Activated CD4-positive, alpha-beta T cell treated with anti-CD3 and anti-CD28 coated beads for 36 hours (primary cell): ENCODE measurements at regions of chr12 and their contacts with region 1.

Region 1: DNA sequence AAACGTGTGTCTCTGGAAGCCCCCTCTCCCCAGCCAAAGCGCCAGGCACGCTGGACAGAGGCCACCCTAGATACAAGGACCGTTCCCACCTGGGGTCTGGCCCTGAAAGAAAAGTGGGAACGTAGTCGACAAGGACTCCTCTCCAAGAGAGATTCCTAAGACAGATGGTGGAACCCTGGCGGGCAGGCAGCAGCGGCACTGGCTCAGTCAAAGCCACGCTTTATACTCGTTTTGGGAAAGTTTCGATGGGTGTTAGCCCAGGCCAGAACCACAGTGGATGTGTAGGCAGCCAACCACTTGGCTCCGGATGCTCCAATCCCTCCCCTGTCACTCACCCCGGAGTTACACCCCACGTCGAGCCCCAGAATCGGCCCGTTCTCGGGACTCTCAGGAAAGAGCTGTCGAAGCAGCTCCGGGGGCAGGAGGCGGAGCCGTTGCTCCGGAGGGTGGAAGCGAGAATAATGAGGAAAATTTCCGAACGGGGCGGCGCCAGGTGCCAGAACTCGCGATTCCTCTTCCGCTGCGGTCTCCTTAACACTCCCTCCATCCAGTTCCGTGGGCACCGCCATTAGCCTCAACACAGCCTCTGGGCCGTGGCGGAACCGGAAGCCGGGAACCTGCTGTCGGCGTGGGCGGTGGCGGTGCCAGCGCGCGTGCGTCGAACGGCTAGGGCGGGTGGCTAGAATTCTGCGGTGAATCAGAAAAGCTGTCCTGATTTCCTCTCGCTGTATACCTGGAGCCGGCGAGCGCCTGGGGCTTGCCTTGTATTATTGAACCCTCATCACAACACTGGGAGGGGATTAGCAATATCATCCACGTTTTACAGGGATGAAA is at the start of gene BCDIN3D:
- DNase-seq: peak; percentile 97
- ATAC-seq: peak; percentile 92
- H3K4me3 Mint-ChIP-seq: peak within 1 kb of the TSS; percentile 90
- H3K27ac Mint-ChIP-seq: peak within 1 kb of the TSS; percentile 91
- H3K4me1 Mint-ChIP-seq: peaks cover 30% of the 10 kb centered on the region
- H3K27me3 Mint-ChIP-seq: no peaks in the 10 kb centered on the region
- total RNA-seq, gene BCDIN3D: 5.5 to 5.6 TPM

Region 2: DNA sequence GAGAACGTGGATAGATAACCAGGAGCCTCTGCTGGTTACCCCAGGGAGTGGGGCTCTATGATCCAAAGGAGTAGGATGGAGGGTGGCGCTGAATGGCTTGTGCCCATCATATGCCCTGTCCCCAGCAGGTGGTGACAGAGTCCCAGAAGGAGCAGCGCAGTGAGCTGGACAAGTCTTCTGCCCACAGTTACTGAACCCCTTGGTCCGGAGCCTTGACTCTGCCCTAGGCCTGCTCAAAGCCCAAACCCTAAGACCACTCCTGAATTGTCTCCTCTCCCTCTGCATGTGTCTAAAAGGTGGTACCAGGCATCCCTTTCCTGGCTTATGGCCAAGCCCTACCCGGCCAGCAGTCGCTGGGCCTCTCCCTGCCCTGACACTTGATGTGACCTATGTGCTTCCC is 544.6 kb before region 1 on chr12:
- CTCF ChIA-PET with region 1: no interaction called
- POLR2A ChIA-PET with region 1: no interaction called
- intact Hi-C with region 1: no loop called
- DNase-seq: peak; percentile 44
- ATAC-seq: no peak
- H3K4me3 Mint-ChIP-seq: no peak overlapping the region
- H3K27ac Mint-ChIP-seq: no peak overlapping the region
- H3K4me1 Mint-ChIP-seq: peaks cover 17% of the 10 kb centered on the region
- H3K27me3 Mint-ChIP-seq: peaks cover 53% of the 10 kb centered on the region

Region 3: DNA sequence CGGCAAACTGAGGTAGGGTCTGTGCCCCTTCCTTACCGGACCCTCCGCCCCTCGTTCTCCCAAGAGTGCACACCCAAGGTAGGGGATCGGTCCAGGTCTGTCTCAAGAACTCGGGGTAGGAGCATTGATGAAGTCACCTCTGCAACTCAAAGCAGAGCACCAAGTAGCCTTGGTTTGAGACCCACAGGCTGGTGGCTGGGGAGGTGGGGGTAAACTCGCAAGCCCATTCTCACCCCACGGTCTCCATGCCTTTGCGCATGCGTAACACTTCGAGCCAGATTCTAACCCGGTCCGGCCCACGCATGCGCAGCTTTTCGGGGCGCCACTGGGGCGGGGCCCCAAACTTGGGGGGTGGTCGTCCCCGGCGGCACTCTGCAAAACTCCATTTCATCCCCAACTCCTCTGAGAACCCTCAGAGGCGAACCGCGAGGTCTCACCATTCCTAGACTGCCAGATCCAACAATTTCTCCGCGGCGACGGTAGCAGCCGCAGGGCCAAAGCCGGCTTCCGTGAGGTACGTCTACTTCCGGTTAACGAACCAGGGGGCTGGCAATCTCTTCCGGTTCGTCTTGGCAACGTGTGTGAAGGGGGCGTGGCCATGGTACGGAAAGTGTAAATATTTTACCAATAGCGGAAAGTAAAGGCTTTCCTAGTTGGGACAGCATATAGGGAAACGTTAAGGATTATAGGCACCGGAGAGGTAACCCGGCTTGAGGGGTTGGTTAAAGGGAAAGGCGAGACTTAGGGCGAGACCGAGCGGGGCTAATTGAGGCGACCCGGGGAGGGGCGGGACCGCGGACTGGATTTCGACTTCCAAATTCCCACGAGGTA is 274.9 kb before region 1 on chr12 and contains the start of gene MCRS1:
- CTCF ChIA-PET with region 1: no interaction called
- POLR2A ChIA-PET with region 1: no interaction called
- intact Hi-C with region 1: loop called in 1 of 2 experiments (anchors 5 kb)
- DNase-seq: peak; percentile 93
- ATAC-seq: peak; percentile 88
- H3K4me3 Mint-ChIP-seq: peak within 1 kb of the TSS; percentile 90
- H3K27ac Mint-ChIP-seq: peak within 1 kb of the TSS; percentile 95
- H3K4me1 Mint-ChIP-seq: peaks cover 37% of the 10 kb centered on the region
- H3K27me3 Mint-ChIP-seq: no peaks in the 10 kb centered on the region
- total RNA-seq, gene MCRS1: 48.2 to 58.2 TPM

Region 4: DNA sequence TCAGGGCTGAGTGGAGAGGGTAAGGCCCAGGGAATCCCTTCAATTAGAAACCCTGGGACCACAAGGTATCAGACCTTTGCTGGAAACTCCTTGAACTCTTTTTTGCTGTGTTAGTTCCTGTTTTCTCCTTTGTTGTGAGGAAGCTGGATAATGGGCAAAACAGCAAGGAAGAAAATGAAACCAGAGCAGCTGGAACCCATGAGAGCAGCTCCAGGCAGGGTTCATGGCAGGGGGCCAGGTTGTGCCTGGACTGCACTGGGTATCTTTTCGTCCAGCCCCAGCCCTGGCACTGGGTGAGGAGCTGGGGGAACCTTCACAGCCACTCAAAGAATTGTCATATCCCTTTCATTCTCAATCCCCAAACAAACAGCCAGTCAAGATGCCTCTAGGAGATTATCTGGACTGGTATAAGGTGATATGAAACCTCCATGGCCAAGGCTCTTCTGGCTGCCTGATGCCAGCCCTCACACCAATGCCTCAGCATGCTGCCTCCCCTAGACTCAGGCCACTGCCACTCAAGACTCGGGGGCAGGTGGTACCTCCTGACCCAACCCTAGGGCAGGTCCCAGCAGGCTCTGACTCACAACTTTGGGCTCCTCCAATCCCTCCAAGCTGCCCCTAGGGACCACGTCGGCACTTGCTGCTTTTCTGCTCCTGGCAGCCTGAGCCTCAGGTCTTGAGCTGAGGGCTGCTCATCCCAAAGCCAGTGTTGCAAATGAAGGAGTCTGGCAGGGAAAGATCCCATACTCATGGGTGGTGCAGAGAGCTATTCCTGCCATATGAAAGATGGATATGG is 253.8 kb before region 1 on chr12:
- CTCF ChIA-PET with region 1: no interaction called
- POLR2A ChIA-PET with region 1: no interaction called
- intact Hi-C with region 1: no loop called
- DNase-seq: no peak
- ATAC-seq: no peak
- H3K4me3 Mint-ChIP-seq: no peak overlapping the region
- H3K27ac Mint-ChIP-seq: no peak overlapping the region
- H3K4me1 Mint-ChIP-seq: no peaks in the 10 kb centered on the region
- H3K27me3 Mint-ChIP-seq: no peaks in the 10 kb centered on the region

Region 5: GRCh38 chr12:49644620-49644994 is 198.1 kb before region 1 on chr12:
- CTCF ChIA-PET with region 1: interaction called, 3 read pairs
- POLR2A ChIA-PET with region 1: interaction called, 3 read pairs
- intact Hi-C with region 1: loop called in 1 of 2 experiments (anchors 2 kb)
- DNase-seq: peak; percentile 89
- ATAC-seq: peak; percentile 93
- H3K4me3 Mint-ChIP-seq: no peak overlapping the region
- H3K27ac Mint-ChIP-seq: peak overlapping the region; percentile 78
- H3K4me1 Mint-ChIP-seq: peaks cover 18% of the 10 kb centered on the region
- H3K27me3 Mint-ChIP-seq: no peaks in the 10 kb centered on the region

Region 6: DNA sequence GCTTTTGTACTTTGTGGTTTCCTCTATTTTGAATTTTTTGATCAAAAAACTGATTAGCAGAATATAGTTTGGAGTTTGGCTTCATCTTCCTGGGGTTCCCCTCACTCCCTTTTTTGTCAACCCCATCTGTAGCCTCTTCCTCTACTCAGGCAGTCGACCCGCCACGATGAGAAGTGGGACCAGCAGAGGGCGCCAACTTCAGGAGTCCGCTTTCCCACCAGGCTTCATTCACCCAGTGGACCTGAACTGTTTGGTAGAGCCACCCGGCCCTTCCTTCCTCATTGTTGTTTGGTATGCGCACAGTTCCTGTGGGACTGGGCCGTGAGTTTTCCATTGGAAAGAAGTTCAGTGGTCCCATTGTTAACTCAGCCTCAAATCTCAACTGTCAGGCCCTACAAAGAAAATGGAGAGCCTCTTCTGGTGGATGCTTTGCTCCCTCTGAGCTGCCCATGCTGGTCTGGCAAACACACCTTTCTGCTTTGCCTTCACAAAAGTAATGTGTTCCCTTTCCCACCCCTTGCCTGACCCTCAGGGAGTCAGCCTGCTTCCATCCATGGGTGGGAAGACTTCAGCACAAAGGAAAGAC is 79.6 kb before region 1 on chr12:
- CTCF ChIA-PET with region 1: interaction called, 19 read pairs
- POLR2A ChIA-PET with region 1: no interaction called
- intact Hi-C with region 1: no loop called
- DNase-seq: peak; percentile 89
- ATAC-seq: peak; percentile 59
- H3K4me3 Mint-ChIP-seq: peak overlapping the region; percentile 24
- H3K27ac Mint-ChIP-seq: peak overlapping the region; percentile 77
- H3K4me1 Mint-ChIP-seq: peaks cover 62% of the 10 kb centered on the region
- H3K27me3 Mint-ChIP-seq: no peaks in the 10 kb centered on the region

Region 7: DNA sequence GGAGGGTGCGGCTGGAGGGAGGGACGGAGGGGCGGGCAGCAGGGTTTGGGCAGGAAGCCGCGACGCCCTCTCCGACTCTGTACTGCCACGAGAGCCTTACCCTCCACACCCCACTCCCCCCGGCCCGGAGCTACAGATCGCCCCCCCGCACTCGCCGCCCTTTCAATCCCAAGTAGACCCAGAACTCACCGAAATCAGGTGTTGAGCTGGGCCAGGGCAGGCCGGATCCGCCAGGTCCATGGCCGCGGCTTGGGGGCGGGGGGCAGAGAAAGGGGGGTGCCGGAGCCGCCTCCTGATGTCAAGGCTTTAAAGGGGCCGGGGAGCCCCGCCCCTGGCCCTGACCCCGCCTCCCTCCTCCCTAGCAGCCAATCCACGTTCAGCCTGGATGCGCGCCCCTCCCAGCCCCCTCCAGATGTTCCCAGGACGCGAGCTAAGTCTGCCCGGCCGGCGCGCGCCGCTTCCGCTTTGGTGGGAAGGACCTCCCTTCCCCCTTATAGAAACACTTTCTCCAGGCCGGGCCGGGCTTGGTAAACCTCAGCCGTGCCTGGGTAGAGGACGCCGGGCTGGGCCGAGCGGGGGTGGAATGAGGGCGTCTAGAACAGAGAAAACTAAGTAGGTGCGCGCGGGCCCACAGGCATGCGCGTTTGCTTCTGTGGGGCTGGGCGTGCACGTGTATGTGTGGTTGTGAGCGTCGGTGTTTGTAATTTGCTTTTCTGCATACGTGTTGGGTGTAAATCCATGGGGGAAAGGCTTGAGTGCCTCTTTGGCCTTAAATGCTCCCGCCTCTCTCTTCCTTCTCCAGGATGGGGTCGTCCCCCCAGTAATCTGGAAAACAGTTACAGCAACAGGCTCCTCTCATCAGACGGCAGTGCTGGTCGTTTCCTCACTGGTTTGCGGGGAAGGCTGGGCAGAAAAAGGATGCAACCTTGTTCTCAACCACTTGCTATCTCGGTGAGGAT is 14.3 kb before region 1 on chr12 and contains the start of gene NCKAP5L:
- CTCF ChIA-PET with region 1: interaction called, 44 read pairs
- POLR2A ChIA-PET with region 1: interaction called, 8 read pairs
- intact Hi-C with region 1: loop called (anchors 1 kb)
- DNase-seq: peak; percentile 97
- ATAC-seq: peak; percentile 99
- H3K4me3 Mint-ChIP-seq: peak within 1 kb of the TSS; percentile 86
- H3K27ac Mint-ChIP-seq: peak within 1 kb of the TSS; percentile 90
- H3K4me1 Mint-ChIP-seq: peaks cover 27% of the 10 kb centered on the region
- H3K27me3 Mint-ChIP-seq: no peaks in the 10 kb centered on the region
- total RNA-seq, gene NCKAP5L: 4.3 to 4.5 TPM

Region 8: GRCh38 chr12:50025187-50026059 is 182.7 kb after region 1 on chr12 and contains the start of gene RACGAP1:
- CTCF ChIA-PET with region 1: no interaction called
- POLR2A ChIA-PET with region 1: no interaction called
- intact Hi-C with region 1: loop called (anchors 1 to 10 kb)
- DNase-seq: peak; percentile 97
- ATAC-seq: peak; percentile 98
- H3K4me3 Mint-ChIP-seq: peak within 1 kb of the TSS; percentile 90
- H3K27ac Mint-ChIP-seq: peak within 1 kb of the TSS; percentile 95
- H3K4me1 Mint-ChIP-seq: peaks cover 23% of the 10 kb centered on the region
- H3K27me3 Mint-ChIP-seq: no peaks in the 10 kb centered on the region
- total RNA-seq, gene RACGAP1: 99.7 to 118 TPM

Region 9: DNA sequence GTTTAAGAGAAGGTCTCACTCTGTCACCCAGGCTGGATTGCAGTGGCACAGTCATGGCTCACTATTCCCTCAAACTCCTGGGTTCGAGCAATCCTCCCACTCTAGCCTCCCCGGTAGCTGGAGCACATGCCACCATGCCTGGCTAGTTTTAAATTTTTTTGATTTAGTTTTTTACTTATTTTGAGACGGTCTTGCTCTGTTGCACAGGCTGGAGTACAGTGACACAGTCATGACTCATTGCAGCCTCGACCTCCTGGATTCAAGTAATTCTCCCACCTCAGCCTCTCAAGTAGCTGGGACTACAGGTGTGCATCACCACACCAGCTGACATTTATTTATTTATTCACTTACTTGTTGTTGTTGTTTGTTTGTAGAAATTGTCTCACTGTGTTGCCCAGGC is 639.8 kb after region 1 on chr12:
- CTCF ChIA-PET with region 1: no interaction called
- POLR2A ChIA-PET with region 1: no interaction called
- intact Hi-C with region 1: no loop called
- DNase-seq: no peak
- ATAC-seq: no peak
- H3K4me3 Mint-ChIP-seq: no peak overlapping the region
- H3K27ac Mint-ChIP-seq: no peak overlapping the region
- H3K4me1 Mint-ChIP-seq: no peaks in the 10 kb centered on the region
- H3K27me3 Mint-ChIP-seq: no peaks in the 10 kb centered on the region